Dendritic cell treated with granulocyte-macrophage colony-stimulating factor and Interleukin-4, amounts not matched to agents 40 ng/mL and 50 ng/mL, for 4 days (primary cell): ENCODE measurements at regions of chr9 and their contacts with region 1.

Region 1: GRCh38 chr9:126722252-126723078 is 82.4 kb upstream of the ZBTB43 start:
- H3K4me3 Mint-ChIP-seq: peak overlapping the region; percentile 84
- H3K27ac Mint-ChIP-seq: peak overlapping the region; percentile 91
- H3K4me1 Mint-ChIP-seq: peaks cover 59% of the 10 kb centered on the region
- H3K27me3 Mint-ChIP-seq: peaks cover 9% of the 10 kb centered on the region

Region 2: DNA sequence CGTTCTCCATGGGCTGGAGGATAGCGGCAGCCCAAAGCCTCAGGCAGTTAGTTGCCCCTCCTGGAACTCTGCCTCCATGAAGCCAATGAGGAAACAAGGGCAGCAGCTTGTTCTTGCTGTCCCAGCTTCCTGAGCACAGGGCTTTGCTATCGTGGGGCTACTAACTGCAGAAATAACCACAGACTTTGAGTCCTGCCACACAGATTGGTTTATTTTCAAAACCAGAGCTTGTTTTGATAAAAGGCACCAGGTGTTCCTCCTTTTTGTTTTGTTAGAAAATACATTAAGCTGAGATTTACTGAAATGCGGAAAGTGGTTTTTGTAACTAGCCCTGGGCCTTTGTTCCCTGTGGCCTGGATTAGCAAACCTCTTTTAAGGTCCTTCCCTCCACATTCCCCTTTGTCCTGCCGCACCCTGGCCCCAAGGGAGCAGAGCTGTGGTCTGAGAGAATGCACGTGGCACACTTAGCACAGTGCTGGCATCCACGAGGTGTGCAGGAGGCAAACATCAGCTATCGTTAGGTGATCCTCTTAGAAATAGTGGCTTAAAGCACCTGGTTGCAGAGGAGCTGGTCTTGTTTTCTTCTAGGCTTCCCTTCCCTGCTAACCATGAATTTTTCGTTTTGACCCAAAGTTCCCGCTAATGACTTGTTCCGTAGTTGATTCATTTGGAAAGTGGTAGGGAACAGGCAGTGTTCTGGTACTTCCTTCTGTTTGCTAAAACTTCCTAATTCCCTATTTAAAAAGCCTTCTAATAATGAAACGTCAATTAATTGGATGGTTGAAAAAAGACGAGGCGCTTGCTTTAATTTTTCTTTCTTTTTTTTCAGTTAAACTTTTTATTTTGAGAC is 374.3 kb before region 1 on chr9:
- intact Hi-C with region 1: no loop called
- H3K4me3 Mint-ChIP-seq: peak overlapping the region; percentile 60
- H3K27ac Mint-ChIP-seq: peak overlapping the region; percentile 91
- H3K4me1 Mint-ChIP-seq: peaks cover 77% of the 10 kb centered on the region
- H3K27me3 Mint-ChIP-seq: no peaks in the 10 kb centered on the region

Region 3: DNA sequence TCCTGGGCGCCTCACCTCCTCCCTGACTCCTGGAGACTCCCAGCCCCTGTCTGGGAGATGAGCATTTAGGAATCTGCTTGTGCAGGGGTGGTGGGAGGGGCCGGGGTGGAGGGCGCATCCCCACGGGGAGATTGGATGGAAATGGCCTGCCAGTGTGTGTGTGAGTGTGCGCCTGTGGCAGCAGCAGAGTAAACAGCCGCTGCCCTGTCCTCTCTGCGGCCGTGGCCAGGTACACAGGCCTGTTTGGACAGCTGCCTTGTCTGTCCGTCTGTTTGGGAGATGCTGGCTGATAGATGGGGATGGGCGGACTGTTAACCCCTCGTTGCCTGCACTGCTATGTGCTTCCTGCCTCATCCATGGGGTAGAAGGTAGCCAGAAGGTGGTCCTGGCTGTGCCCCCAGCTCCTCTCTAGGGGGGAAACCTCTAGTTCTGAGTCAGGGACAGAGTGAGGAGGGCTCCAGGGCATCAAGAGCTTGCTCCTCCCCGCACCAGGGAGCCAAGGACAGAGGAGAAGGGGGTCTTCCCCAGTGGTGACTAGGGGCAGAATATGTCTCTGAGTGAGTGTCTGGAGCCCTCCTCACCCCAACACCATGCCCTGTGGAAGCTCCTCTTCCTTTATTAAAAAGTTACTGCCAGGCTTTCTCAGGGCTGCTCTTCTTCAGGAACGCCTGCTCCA is 48.6 kb before region 1 on chr9:
- intact Hi-C with region 1: no loop called
- H3K4me3 Mint-ChIP-seq: no peak overlapping the region
- H3K27ac Mint-ChIP-seq: no peak overlapping the region
- H3K4me1 Mint-ChIP-seq: peaks cover 5% of the 10 kb centered on the region
- H3K27me3 Mint-ChIP-seq: peaks cover 72% of the 10 kb centered on the region

Region 4: DNA sequence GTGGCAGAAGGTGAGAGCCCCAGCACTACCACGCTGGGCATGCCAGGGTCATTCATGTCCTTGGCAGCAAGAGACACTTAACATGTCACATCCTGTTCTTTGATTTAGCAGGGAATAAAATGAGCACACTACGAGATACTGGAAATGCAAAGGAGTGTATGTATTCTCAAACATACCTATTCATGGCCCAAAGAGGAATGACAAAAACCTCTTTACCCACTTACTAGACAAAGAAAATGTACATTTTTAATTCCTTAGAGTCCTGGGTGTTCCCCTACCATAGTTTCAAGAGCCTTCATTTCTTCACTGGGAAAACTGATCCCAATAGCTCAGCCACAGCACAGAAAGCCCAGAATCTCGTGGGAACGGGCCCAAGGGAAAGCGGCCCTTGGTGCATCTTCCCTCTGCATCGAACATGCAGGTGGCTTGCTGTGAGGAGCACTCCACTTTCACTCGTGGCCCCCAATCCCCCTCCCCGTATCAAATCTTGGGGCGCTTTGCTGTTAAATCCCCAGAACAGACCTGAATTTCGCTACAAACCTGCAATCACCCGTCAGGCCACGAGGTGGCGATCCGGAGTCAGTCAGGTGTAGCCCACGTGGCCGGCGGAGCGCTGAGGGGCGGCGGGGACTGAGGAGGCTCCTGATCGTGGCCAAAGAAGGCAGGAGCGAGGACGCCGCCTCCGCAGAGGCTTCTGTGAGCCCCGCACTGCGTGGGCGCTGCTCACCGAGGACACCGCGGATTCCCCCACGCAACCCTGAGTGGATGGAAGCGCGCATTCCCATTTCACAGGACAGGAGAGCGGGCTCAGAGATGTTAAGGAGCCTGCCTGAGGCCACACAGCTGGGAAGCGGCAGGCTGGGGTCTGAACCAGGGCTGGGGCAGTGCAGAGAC is 17.3 kb before region 1 on chr9:
- intact Hi-C with region 1: loop called (anchors 2 kb)
- H3K4me3 Mint-ChIP-seq: peak overlapping the region; percentile 65
- H3K27ac Mint-ChIP-seq: peak overlapping the region; percentile 75
- H3K4me1 Mint-ChIP-seq: peaks cover 39% of the 10 kb centered on the region
- H3K27me3 Mint-ChIP-seq: peaks cover 64% of the 10 kb centered on the region